AG04450 (cell line): ENCODE measurements at regions of chr6 and their contacts with region 1.

Region 1: DNA sequence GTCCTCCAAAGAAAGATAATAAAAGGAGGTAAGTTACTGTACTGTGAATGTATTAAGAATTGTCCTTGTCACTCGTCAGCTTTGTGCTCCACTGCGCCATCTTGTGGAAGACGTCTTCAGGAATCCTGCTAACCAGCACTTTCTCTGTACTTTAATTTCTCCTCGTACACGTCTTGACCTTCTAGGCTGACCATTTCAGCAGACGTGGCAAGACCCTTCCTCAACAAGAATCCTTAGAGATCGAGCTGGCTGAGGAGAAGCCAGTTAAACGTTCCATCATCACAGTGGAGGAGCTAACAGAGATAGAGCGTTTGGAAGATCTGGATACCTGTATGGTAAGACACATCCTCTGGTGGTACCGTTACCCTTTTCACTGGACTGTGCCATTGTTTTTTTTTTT is 95.5 kb upstream of the SCGN start:
- DNase-seq: peak; percentile 42
- H3K4me3 ChIP-seq: no peak overlapping the region
- H3K27ac ChIP-seq: no peak overlapping the region
- H3K27me3 ChIP-seq: no peaks in the 10 kb centered on the region
- CTCF ChIP-seq: peak; percentile 87

Region 2: DNA sequence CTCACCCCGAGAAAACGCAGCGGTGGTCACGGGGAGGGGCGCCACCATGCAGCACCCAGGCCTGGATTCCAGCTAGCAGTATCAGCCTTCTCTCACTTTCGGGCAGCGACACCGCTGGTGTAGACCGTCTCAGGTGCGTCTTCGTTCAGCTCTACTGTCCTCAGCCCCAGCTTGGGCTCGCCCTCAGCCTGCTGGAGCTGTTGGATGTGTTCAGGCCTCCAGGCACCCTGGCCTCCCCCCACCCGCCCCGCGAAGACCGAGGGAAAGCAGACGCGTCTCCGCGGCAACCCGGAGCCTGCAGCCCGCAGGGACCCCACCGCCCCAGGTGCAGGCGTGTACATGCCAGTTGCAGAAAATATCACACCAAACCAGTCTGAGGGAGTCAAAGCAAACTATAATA is 338.2 kb before region 1 on chr6:
- CTCF ChIA-PET with region 1: interaction called, 84 read pairs
- POLR2A ChIA-PET with region 1: no interaction called
- DNase-seq: no peak
- H3K4me3 ChIP-seq: no peak overlapping the region
- H3K27ac ChIP-seq: no peak overlapping the region
- H3K27me3 ChIP-seq: no peaks in the 10 kb centered on the region
- CTCF ChIP-seq: no peak

Region 3: GRCh38 chr6:25511376-25511775 is 45.1 kb before region 1 on chr6:
- CTCF ChIA-PET with region 1: interaction called, 10 read pairs
- POLR2A ChIA-PET with region 1: no interaction called
- DNase-seq: no peak
- H3K4me3 ChIP-seq: no peak overlapping the region
- H3K27ac ChIP-seq: no peak overlapping the region
- H3K27me3 ChIP-seq: no peaks in the 10 kb centered on the region
- CTCF ChIP-seq: no peak

Region 4: GRCh38 chr6:25586927-25587326 is 30.4 kb after region 1 on chr6:
- CTCF ChIA-PET with region 1: no interaction called
- POLR2A ChIA-PET with region 1: no interaction called
- DNase-seq: no peak
- H3K4me3 ChIP-seq: no peak overlapping the region
- H3K27ac ChIP-seq: no peak overlapping the region
- H3K27me3 ChIP-seq: no peaks in the 10 kb centered on the region
- CTCF ChIP-seq: no peak